AG04449 (cell line): ENCODE measurements at regions of chr2 and their contacts with region 1.

Region 1: DNA sequence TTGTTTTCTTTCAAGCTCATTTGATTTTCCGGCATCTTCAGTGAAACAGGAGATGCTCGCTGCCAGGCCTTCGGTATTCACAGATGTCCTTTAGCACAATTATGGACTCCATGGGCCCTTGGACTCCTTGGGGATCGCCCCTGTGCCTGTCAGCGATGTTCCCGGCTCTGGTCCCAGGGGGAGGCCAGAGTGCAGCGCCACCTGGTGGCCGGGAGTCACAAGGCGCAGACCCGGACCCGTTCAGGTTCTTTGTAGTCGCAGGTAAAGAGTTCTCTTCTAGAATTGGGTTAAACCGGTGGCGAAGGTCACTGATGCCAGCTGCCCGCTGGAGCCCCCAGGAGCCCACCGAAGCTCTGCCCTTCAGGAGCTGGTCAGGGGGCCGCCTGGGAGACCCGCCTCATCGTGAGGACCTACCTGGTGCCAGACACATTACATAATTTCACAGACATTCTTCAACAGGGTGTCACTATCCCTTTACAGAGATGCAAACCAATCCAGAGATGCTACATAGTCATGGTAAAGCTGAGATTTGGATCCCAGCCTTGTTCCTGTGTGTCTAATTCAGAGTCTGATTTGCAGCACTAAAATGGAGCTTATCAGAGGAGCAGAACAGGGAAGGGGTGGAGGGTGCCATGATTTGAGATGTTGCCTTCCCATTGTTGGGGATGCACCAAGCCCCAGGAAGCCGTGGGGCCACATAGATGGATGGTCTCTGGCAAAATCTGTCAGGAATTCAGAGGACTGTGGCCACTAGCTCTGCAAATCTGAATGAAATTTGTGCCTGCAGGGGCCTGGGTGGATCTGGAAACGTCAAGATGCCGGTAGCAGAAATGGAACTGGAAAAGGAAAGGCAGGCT is 6.0 kb upstream of the INPP5D start:
- DNase-seq: no peak
- H3K4me3 ChIP-seq: no peak overlapping the region
- CTCF ChIP-seq: peak; percentile 93

Region 2: GRCh38 chr2:232843834-232844233 is 210.3 kb before region 1 on chr2:
- CTCF ChIA-PET with region 1: interaction called, 18 read pairs
- POLR2A ChIA-PET with region 1: no interaction called
- DNase-seq: no peak
- H3K4me3 ChIP-seq: no peak overlapping the region
- CTCF ChIP-seq: peak; percentile 6

Region 3: DNA sequence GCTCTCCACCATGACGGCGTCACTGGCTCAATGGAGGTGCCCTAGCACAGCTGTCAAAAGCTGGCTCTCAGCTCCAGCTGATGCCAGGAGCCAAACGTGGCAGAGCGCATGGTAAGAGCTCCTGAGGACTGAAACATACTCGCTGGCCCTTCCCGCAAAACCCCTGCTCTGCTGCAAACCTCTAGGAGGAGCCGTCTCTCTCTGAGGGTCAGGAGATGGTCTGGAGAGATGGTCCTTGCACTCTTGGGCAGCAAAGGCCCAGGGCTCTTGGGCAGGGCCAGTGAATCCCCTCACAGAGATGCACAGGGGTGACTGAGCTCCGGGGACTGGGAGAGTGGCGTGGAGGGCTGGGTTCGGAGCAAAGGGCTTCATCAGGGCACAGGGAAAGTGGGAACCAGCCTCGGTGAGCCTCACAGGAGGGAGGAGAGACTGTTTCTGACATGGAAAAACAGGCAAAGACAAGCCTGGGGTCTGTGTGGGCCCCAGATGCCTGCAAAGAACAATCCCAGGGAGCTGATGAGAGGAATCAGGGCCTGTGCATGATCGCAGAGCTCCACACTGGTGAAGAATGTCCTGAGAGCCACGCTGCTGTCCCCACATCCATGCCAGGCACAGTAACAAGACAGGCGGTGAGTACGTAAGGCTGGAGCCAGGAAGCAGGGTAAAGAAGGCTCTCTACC is 166.8 kb before region 1 on chr2:
- CTCF ChIA-PET with region 1: interaction called, 11 read pairs
- POLR2A ChIA-PET with region 1: no interaction called
- DNase-seq: no peak
- H3K4me3 ChIP-seq: no peak overlapping the region
- CTCF ChIP-seq: peak; percentile 20

Region 4: DNA sequence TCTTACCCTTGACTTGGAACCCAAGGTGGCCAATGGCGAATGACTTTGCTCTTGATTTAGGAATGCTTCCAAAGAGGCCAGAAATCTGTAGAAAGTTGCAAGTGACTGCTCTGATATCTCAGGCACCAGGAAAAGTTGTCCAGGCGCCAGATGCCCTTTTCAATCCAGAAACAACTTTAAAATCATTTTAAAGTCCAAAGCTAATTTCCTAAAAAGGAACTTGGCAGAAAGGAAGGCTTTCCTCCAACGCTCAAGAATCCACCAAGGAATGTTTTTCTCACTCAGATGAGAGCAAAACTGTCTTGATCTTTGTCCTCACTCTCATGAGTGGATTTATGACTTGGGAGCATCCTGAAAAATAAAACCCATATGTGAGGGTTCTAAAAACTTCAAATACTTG is 46.4 kb before region 1 on chr2:
- CTCF ChIA-PET with region 1: interaction called, 11 read pairs
- POLR2A ChIA-PET with region 1: no interaction called
- DNase-seq: peak; percentile 23
- H3K4me3 ChIP-seq: no peak overlapping the region
- CTCF ChIP-seq: no peak

Region 5: DNA sequence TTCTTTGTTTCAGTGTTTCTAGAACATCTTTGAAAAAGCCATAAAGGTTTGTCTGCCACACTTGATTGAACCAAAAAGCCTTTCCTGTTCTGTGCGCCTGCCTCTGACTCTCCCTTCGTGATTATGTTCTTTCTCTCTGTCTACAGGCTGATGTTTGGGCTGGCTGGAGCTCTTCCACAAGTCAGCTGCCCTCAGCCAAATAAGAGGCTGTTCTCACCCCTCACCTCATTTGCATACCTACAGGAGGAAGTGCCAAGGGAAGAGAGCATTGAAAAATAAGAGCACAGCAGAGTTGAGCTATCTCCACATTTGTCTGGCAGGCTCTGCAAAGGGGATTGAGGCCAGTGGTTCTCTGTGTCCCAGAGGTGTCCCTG is 21.8 kb after region 1 on chr2:
- CTCF ChIA-PET with region 1: interaction called, 15 read pairs
- POLR2A ChIA-PET with region 1: no interaction called
- DNase-seq: no peak
- H3K4me3 ChIP-seq: no peak overlapping the region
- CTCF ChIP-seq: no peak

Region 6: GRCh38 chr2:233185963-233186362 is 131.8 kb after region 1 on chr2:
- CTCF ChIA-PET with region 1: no interaction called
- POLR2A ChIA-PET with region 1: no interaction called
- DNase-seq: no peak
- H3K4me3 ChIP-seq: no peak overlapping the region
- CTCF ChIP-seq: no peak

Region 7: DNA sequence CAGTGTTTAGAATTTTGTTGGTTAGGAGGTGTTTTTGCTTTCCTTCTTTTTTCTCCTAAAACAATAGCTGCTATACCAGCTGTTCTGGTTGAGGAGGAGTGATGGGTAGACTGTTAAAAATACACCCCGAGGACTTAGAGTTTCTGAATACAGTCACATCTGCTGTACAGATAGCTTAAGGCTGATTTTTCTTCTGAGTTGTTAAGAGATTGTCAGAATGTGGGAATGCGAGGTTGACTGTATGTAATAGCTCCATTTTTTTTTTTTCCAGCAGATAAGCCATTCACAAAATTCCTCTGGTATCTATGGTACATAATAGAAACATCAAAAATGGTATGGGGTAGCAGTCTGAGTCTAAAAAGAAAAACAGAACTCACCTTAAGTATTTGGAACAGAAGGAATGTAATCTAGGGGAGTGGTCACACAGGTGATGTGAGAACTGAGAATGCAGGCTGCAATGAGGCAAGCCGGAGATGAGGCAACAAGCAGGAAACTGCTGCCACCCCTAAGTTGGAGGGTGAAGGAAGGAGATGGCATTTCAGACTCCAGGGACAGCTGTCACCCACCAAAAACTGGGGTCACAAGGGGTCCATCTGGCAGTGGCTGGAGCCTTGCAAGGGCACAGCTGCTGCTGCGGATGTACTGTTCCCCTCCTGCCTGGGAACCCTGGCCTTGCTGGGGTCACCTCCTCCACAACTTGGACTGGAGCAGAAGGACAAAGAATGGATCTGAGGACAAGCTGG is 302.6 kb after region 1 on chr2:
- CTCF ChIA-PET with region 1: no interaction called
- POLR2A ChIA-PET with region 1: no interaction called
- DNase-seq: no peak
- H3K4me3 ChIP-seq: no peak overlapping the region
- CTCF ChIP-seq: no peak